IMR-90 (cell line): ENCODE measurements at regions of chr1 and their contacts with region 1.

Region 1: GRCh38 chr1:241181471-241181870 is 175.5 kb downstream of the RGS7 start:
- DNase-seq: no peak
- ATAC-seq: no peak
- H3K4me3 ChIP-seq: no peak overlapping the region
- H3K27ac ChIP-seq: no peak overlapping the region
- H3K4me1 ChIP-seq: no peaks in the 10 kb centered on the region
- H3K27me3 ChIP-seq: no peaks in the 10 kb centered on the region
- CTCF ChIP-seq: no peak
- POLR2A ChIP-seq: no peak
- RAD21 ChIP-seq: no peak

Region 2: DNA sequence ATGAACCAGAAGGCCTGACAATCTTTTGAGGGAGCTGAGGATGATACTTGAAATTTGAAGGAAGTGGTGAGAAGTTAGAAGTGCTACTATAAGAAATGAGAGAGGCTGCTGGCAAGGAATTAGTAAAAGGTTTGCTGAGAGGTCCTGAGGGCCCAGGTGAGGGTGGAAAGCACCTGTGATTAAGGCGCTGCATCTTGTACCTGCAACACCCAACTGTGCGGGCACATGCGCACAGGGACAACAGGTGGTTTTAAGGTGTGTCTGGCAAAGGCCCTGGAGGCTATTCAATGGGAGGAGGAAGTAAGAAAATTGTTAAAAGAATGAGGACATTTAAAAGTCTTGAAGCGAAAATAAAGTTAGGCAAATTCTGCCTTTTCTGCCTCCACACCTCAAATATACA is 173.8 kb before region 1 on chr1:
- CTCF ChIA-PET with region 1: no interaction called
- POLR2A ChIA-PET with region 1: no interaction called
- dilution Hi-C with region 1: no loop called
- in situ Hi-C with region 1: no loop called
- intact Hi-C with region 1: no loop called
- DNase-seq: no peak
- ATAC-seq: no peak
- H3K4me3 ChIP-seq: no peak overlapping the region
- H3K27ac ChIP-seq: no peak overlapping the region
- H3K4me1 ChIP-seq: no peaks in the 10 kb centered on the region
- H3K27me3 ChIP-seq: no peaks in the 10 kb centered on the region
- CTCF ChIP-seq: no peak
- POLR2A ChIP-seq: no peak
- RAD21 ChIP-seq: no peak

Region 3: DNA sequence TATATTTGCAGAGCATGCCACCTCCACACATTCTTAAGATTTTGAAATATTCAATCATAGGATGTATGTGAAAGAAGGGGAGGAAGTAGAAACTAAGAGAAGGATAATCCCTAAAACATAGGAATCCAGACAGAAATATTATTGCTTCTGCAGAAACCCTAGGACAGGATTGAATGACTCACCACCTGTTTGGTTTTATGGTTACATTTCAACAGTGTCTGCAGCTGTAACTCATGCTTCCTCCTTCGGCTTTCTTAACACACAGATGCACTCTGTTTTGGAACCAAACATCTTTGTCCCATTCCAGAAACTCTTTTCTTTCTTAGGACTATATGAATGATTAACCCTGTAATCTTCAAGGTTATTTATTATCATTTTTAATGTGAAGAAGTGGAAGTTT is 154.9 kb after region 1 on chr1:
- CTCF ChIA-PET with region 1: no interaction called
- POLR2A ChIA-PET with region 1: no interaction called
- dilution Hi-C with region 1: no loop called
- in situ Hi-C with region 1: no loop called
- intact Hi-C with region 1: loop called (anchors 1 kb)
- DNase-seq: peak; percentile 35
- ATAC-seq: 0 out of 2 replicates have a peak, but pooled peaks have one; percentile 27
- H3K4me3 ChIP-seq: no peak overlapping the region
- H3K27ac ChIP-seq: no peak overlapping the region
- H3K4me1 ChIP-seq: no peaks in the 10 kb centered on the region
- H3K27me3 ChIP-seq: no peaks in the 10 kb centered on the region
- CTCF ChIP-seq: no peak
- POLR2A ChIP-seq: no peak
- RAD21 ChIP-seq: no peak